IMR-90 (cell line): ENCODE measurements at regions of chr7 and their contacts with region 1.

Region 1: DNA sequence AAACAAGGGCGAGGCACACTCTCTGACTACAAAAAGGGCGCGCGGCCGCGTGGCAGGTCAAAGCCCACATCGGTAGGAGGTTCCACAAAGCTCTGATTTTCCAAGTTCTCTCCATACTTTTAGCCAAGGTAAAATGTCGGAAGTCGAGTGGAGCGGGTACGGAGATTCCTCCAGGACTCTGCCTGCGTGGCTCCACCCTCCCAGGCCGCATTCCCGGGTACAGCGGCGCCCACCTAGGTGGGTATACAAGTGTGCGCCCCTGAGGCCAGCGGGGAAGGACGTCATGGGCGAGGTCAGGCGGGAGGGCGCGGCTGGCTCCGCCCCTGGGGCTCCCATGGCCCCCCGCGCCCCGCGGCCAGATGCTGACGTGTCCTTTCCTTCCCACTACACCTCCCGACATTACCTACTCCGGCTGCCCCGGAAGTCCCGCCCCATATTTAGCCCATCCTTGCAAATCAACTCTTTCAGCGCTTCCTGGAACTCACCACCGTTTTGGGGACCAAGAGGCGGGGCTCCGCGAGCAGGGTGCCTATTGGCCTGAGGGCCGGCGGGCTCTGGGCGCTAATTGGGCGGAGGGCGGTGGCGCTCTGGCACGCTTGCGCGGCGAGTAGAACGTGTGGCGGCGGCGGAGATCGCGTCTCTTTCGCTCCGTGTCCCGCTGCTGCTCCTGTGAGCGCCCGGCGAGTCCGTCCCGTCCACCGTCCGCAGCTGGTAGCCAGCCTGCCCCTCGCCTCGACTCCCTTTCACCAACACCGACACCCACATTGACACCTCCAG is at the start of gene SND1:
- DNase-seq: peak; percentile 99
- ATAC-seq: peak; percentile 96
- H3K4me3 ChIP-seq: peak within 1 kb of the TSS; percentile 91
- H3K27ac ChIP-seq: peak within 1 kb of the TSS; percentile 91
- H3K4me1 ChIP-seq: peaks cover 8% of the 10 kb centered on the region
- H3K27me3 ChIP-seq: no peaks in the 10 kb centered on the region
- CTCF ChIP-seq: no peak
- POLR2A ChIP-seq: peak; percentile 90
- RAD21 ChIP-seq: no peak
- total RNA-seq, gene SND1: 246 and 294 TPM in 2 replicates

Region 2: DNA sequence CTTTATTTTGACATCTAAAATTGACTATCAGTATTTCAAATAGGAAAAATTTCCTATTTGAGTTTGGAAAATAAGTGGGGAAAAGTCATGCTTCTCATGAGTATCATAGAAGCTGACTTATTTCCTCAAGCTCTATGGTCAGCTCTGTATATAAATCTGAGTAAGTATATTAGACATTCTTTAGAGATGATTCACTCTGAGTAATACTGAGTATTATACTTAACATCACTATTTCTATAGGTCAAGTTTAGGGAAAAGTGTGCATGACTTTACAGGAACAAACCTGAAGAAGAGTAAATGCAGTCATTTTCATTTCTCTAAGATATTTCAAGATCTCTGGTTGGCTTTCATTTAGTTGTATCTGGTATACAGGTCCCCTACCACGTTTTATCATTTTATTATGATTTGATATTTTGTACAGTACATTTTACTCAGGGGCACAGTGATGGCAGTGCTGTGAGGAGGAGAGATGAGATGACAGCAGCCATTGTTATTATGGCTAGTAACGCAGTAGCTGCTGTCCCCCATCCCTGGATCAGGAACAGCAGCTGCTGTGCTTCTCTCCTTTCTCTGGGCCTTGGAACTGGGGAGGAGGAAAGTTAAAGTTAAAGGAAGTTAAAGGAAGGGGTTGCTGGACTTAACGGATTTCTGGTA is 15.4 kb after region 1 on chr7:
- CTCF ChIA-PET with region 1: interaction called, 4 read pairs
- POLR2A ChIA-PET with region 1: no interaction called
- dilution Hi-C with region 1: no loop called
- in situ Hi-C with region 1: no loop called
- intact Hi-C with region 1: loop called (anchors 1 kb)
- DNase-seq: peak; percentile 86
- ATAC-seq: peak; percentile 85
- H3K4me3 ChIP-seq: no peak overlapping the region
- H3K27ac ChIP-seq: peak overlapping the region; percentile 97
- H3K4me1 ChIP-seq: peaks cover 16% of the 10 kb centered on the region
- H3K27me3 ChIP-seq: no peaks in the 10 kb centered on the region
- CTCF ChIP-seq: no peak
- POLR2A ChIP-seq: no peak
- RAD21 ChIP-seq: no peak